T-cell (primary cell): ENCODE measurements at regions of chr2 and their contacts with region 1.

Region 1: DNA sequence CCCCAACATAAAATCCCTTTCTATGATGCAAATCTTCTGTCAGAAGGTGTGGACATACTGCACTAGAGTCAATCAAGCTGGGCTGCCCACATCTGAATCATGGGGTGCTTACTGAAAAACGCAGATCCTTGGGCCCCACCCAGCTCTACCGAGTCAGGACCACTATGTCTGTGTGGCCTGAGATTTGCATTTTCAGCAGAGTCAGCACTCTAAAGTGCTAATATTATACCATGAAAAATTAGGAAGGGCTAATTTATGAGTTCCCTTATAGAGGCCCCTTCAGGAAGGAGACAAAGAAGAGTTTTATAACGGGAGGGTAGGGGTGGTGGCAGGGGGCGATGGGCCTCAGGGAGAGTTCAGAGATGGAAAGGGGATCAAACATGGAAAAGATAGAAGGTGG is 163.3 kb upstream of the NABP1 start:
- DNase-seq: no peak
- ATAC-seq: no peak
- H3K4me3 ChIP-seq: no peak overlapping the region
- H3K4me3 Mint-ChIP-seq: no peak overlapping the region
- H3K27ac ChIP-seq: no peak overlapping the region
- H3K27ac Mint-ChIP-seq: no peak overlapping the region
- H3K4me1 ChIP-seq: no peaks in the 10 kb centered on the region
- H3K4me1 Mint-ChIP-seq: no peaks in the 10 kb centered on the region
- H3K27me3 ChIP-seq: no peaks in the 10 kb centered on the region
- H3K27me3 Mint-ChIP-seq: peaks cover 1 to 9% of the 10 kb centered on the region in 2 donors

Region 2: GRCh38 chr2:191352536-191352935 is 162.1 kb before region 1 on chr2:
- CTCF ChIA-PET with region 1: no interaction called
- POLR2A ChIA-PET with region 1: no interaction called
- DNase-seq: no peak
- ATAC-seq: no peak
- H3K4me3 ChIP-seq: no peak overlapping the region
- H3K4me3 Mint-ChIP-seq: no peak overlapping the region
- H3K27ac ChIP-seq: no peak overlapping the region
- H3K27ac Mint-ChIP-seq: no peak overlapping the region
- H3K4me1 ChIP-seq: peaks cover 0 to 2% of the 10 kb centered on the region in 2 experiments
- H3K4me1 Mint-ChIP-seq: no peaks in the 10 kb centered on the region
- H3K27me3 ChIP-seq: peaks cover 0 to 2% of the 10 kb centered on the region in 2 experiments
- H3K27me3 Mint-ChIP-seq: peaks cover 3 to 10% of the 10 kb centered on the region in 2 donors

Region 3: GRCh38 chr2:191533693-191534180 is 19.1 kb after region 1 on chr2:
- CTCF ChIA-PET with region 1: no interaction called
- POLR2A ChIA-PET with region 1: interaction called in 1 of 2 experiments, 13 read pairs
- DNase-seq: no peak
- ATAC-seq: no peak
- H3K4me3 ChIP-seq: no peak overlapping the region
- H3K4me3 Mint-ChIP-seq: no peak overlapping the region
- H3K27ac ChIP-seq: no peak overlapping the region
- H3K27ac Mint-ChIP-seq: no peak overlapping the region
- H3K4me1 ChIP-seq: no peaks in the 10 kb centered on the region
- H3K4me1 Mint-ChIP-seq: no peaks in the 10 kb centered on the region
- H3K27me3 ChIP-seq: no peaks in the 10 kb centered on the region
- H3K27me3 Mint-ChIP-seq: peaks cover 0 to 4% of the 10 kb centered on the region in 2 donors